Common myeloid progenitor, CD34-positive (primary cell): ENCODE measurements at regions of chr1 and their contacts with region 1.

Region 1: DNA sequence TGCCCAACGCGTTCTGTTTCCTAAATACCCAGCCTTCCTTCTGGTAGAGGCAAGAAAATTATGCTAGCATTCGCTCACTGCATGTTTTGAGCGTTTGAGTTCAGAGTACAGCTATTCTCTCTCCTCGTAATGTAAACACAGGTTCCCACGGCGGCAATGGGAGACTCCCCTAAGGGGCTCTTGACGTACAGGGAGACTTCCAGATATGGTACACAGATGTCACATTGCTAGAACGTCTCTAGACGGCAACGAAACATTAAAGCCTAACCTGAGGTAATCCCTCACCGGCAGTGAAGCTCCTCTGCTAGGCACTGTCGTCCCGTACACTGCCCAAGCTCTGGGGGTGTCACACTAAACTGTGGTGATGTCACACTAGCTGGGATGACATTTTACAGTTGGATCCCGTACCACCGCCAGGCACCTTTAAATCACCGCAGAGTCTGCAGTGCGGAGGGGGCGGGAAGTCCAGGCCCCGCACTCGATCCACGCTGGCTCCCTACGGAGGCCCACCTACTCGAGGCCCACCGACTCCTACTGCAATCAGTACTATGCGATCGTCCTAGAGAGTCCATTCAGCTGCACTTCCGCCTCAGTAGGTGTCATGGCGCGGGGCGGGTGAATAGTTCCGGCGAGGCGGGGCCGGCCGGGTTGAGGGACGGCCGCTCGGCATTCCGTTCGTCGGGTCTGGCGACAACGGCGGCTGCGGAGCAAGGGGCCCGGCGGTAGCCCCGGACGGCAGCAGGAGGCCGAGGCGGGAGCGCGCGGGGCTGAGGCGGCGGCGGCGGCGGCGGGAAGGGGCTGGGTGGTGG is at the start of gene HIPK1:
- DNase-seq: peak; percentile 91 to 97 (median 94)
- H3K4me3 ChIP-seq: peak within 1 kb of the TSS; percentile 74 to 100 (median 95)
- H3K27ac ChIP-seq: peak within 1 kb of the TSS; percentile 100
- H3K4me1 ChIP-seq: peaks cover 32 to 56% (median 44%) of the 10 kb centered on the region in 4 experiments
- H3K27me3 ChIP-seq: no peaks in the 10 kb centered on the region

Region 2: DNA sequence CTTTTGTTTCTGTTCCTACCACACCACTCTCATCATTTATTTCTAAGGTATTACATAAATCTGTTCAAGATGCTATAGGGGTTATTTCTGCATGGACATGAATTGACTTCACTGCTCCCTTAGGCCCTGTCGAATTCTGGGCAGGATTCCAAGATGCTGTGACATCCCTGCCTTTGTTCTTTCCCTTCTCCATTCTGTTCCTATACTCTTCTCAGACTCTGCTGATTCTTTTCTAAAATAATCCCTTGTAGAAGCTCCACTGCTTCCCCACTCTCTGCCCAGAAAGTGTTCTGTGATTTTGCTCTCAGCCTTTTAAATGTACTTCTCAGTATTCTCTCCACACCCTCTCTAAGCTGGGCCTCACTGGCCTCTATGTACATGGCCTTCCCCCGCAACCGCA is 269.1 kb before region 1 on chr1:
- CTCF ChIA-PET with region 1: no interaction called
- POLR2A ChIA-PET with region 1: no interaction called
- DNase-seq: no peak
- H3K4me3 ChIP-seq: no peak overlapping the region
- H3K27ac ChIP-seq: no peak overlapping the region
- H3K4me1 ChIP-seq: peaks cover 0 to 5% (median 0%) of the 10 kb centered on the region in 4 experiments
- H3K27me3 ChIP-seq: no peaks in the 10 kb centered on the region

Region 3: DNA sequence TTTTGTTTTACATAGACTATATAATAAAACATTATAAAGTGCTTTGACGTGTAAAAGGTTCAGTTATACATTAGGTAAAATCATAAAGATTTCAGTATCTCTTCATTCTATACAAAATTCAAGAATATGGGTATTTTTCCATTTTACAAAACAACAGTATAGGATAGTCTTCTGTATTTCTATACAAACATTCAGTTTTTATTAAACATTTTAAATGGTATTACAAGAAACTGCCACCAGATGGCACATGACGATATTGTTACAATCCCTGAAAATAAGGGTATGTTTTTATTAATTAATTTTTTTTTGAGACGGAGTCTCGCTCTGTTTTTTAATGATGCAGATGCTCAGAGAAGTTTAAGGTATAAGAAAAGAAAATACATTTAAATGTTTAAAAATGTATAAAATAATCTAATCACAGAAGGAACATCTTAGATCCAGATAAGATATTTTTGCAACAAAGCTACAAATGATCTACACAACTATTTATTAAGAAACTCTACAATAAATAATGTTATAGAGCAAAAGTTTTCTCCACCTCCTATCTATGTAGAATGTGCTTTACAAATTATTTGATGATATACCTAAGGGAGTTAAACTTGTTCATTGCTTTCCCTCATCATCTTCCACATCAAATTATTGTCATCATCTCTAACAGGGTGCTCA is 93.4 kb before region 1 on chr1:
- CTCF ChIA-PET with region 1: interaction called, 29 read pairs
- POLR2A ChIA-PET with region 1: no interaction called
- DNase-seq: peak; percentile 65 to 81 (median 74)
- H3K4me3 ChIP-seq: peak overlapping the region in 1 of 7 experiments; percentile 45
- H3K27ac ChIP-seq: no peak overlapping the region
- H3K4me1 ChIP-seq: peaks cover 0 to 4% (median 3%) of the 10 kb centered on the region in 4 experiments
- H3K27me3 ChIP-seq: no peaks in the 10 kb centered on the region

Region 4: GRCh38 chr1:113904674-113905434 is 24.3 kb before region 1 on chr1 and contains the starts of genes AP4B1 and DCLRE1B:
- CTCF ChIA-PET with region 1: interaction called, 87 read pairs
- POLR2A ChIA-PET with region 1: interaction called, 43 read pairs
- DNase-seq: peak; percentile 100
- H3K4me3 ChIP-seq: peak within 1 kb of the TSS; percentile 76 to 100 (median 98)
- H3K27ac ChIP-seq: peak within 1 kb of the TSS; percentile 72 to 90
- H3K4me1 ChIP-seq: peaks cover 13 to 24% (median 16%) of the 10 kb centered on the region in 4 experiments
- H3K27me3 ChIP-seq: no peaks in the 10 kb centered on the region

Region 5: GRCh38 chr1:113912594-113913311 is 16.4 kb before region 1 on chr1:
- CTCF ChIA-PET with region 1: interaction called, 87 read pairs
- POLR2A ChIA-PET with region 1: interaction called, 8 read pairs
- DNase-seq: no peak
- H3K4me3 ChIP-seq: no peak overlapping the region
- H3K27ac ChIP-seq: peak overlapping the region in 1 of 2 experiments; percentile 30
- H3K4me1 ChIP-seq: peaks cover 5 to 24% (median 8%) of the 10 kb centered on the region in 4 experiments
- H3K27me3 ChIP-seq: no peaks in the 10 kb centered on the region

Region 6: DNA sequence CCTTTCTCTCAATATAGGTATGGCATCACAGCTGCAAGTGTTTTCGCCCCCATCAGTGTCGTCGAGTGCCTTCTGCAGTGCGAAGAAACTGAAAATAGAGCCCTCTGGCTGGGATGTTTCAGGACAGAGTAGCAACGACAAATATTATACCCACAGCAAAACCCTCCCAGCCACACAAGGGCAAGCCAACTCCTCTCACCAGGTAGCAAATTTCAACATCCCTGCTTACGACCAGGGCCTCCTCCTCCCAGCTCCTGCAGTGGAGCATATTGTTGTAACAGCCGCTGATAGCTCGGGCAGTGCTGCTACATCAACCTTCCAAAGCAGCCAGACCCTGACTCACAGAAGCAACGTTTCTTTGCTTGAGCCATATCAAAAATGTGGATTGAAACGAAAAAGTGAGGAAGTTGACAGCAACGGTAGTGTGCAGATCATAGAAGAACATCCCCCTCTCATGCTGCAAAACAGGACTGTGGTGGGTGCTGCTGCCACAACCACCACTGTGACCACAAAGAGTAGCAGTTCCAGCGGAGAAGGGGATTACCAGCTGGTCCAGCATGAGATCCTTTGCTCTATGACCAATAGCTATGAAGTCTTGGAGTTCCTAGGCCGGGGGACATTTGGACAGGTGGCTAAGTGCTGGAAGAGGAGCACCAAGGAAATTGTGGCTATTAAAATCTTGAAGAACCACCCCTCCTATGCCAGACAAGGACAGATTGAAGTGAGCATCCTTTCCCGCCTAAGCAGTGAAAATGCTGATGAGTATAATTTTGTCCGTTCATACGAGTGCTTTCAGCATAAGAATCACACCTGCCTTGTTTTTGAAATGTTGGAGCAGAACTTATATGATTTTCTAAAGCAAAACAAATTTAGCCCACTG is 11.5 kb after region 1 on chr1:
- CTCF ChIA-PET with region 1: interaction called, 212 read pairs
- POLR2A ChIA-PET with region 1: interaction called, 7 read pairs
- DNase-seq: peak; percentile 44 to 87 (median 86)
- H3K4me3 ChIP-seq: peak overlapping the region in 4 of 7 experiments; percentile 1 to 22 (median 20)
- H3K27ac ChIP-seq: peak overlapping the region; percentile 2 to 28
- H3K4me1 ChIP-seq: peaks cover 10 to 52% (median 40%) of the 10 kb centered on the region in 4 experiments
- H3K27me3 ChIP-seq: no peaks in the 10 kb centered on the region

Region 7: DNA sequence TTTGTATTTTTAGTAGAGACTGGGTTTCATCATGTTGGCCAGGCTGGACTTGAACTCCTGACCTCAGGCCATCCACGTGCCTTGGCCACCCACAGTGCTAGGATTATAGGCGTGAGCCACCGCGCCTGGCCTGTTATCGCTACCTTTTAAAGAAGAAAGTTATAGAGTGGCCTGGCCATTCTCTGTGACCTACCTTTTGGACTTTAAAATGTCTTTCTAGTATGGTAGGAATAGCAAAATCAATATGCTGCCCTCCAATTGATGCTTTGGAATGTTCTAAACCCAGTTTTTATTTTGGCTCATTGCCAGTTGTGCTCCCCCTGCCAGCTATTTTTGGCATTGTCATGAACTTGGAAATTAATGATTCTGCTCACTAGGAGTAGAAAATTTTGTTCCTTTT is 19.9 kb after region 1 on chr1:
- CTCF ChIA-PET with region 1: interaction called, 212 read pairs
- POLR2A ChIA-PET with region 1: interaction called, 22 read pairs
- DNase-seq: peak; percentile 54 to 69 (median 55)
- H3K4me3 ChIP-seq: no peak overlapping the region
- H3K27ac ChIP-seq: peak overlapping the region in 1 of 2 experiments; percentile 5
- H3K4me1 ChIP-seq: peaks cover 26 to 38% (median 31%) of the 10 kb centered on the region in 4 experiments
- H3K27me3 ChIP-seq: no peaks in the 10 kb centered on the region